Activated T-helper 1 cell treated with anti-CD3 and anti-CD28 coated beads, Interleukin-12 subunit alpha, Interleukin-12 subunit beta, Interleukin-2, Interleukin-4 antibody, amounts not matched to agents 30 ng/mL and 10 ng/mL and 1 ng/mL, durations not matched to agents 14 hours and 24 hours and 36 hours (primary cell): ENCODE measurements at regions of chr19 and their contacts with region 1.

Region 1: DNA sequence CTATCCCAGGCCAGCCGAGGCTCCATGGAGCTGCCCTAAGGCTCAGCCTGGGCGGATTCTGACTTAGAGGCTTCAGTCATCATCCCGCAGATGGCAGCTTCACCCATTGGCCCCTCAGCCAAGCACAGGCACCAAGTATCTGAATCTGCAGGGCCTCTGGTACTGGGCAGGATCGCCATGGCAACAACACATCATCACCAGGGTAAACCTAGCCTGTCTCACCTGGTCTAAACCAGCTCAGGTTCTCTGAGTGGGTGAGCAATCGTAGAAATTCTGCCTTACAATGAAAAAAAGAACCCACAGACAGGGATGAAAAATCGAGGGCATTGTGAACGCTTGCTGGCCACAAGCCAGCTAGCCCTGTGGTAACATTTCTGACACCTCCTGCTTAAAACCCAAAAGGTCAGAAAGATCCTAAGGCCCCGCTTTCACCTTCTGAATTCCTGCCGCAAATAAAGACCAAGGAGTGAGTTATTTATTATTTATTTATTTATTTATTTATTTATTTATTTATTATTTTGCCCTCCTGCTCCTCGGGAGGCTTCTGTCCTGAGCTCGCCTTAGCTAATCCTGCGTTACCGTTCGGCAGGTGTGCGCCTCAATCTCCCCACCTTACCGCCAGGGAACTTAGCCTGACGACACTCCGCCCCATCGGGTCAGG is 12.0 kb upstream of the CEACAM21 start:
- DNase-seq: no peak
- H3K4me3 Mint-ChIP-seq: peak overlapping the region; percentile 61
- H3K27ac Mint-ChIP-seq: peak overlapping the region; percentile 52
- H3K4me1 Mint-ChIP-seq: peaks cover 63% of the 10 kb centered on the region
- H3K27me3 Mint-ChIP-seq: peaks cover 2% of the 10 kb centered on the region

Region 2: DNA sequence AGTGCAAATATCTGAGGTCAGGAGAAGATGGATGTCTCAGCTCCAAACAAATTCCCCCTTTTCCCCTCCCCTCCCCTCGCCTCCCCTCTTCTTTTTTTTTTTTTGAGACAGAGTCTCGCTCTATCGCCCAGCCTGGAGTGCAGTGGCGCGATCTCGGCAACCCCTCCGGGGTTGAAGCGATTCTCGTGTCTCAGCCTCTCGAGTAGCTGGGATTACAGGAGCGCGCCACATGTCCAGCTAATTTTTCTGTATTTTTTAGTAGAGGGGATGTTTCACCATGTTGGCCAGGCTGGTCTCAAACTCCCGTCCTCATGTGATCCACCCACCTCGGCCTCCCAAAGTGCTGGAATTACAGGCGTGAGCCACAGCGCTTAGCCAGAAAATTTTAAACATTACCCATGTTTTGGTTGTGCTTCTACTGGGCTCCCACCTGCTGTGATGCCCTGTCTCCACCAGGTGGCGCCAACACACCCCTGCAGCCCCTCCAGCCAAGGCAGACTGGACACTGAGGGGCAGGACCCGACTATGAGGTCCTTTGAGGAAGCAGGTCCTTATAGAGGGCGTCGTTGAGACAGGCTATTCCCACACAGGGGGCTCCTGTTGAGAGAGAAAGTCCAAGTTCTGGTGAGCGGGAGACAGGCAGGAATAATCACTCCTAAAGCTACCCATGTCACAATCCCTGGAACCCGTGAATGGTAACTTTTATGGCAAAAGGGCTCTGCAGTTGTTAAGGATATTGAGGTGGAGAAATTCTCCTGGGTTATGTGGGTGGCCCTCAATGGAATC is 114.7 kb before region 1 on chr19:
- intact Hi-C with region 1: loop called (anchors 1 kb)
- DNase-seq: peak; percentile 60
- H3K4me3 Mint-ChIP-seq: peak overlapping the region; percentile 81
- H3K27ac Mint-ChIP-seq: no peak overlapping the region
- H3K4me1 Mint-ChIP-seq: peaks cover 15% of the 10 kb centered on the region
- H3K27me3 Mint-ChIP-seq: peaks cover 14% of the 10 kb centered on the region

Region 3: GRCh38 chr19:41521931-41522555 is 41.9 kb before region 1 on chr19:
- intact Hi-C with region 1: loop called (anchors 1 kb)
- DNase-seq: no peak
- H3K4me3 Mint-ChIP-seq: peak overlapping the region; percentile 81
- H3K27ac Mint-ChIP-seq: peak overlapping the region; percentile 83
- H3K4me1 Mint-ChIP-seq: peaks cover 27% of the 10 kb centered on the region
- H3K27me3 Mint-ChIP-seq: peaks cover 21% of the 10 kb centered on the region

Region 4: DNA sequence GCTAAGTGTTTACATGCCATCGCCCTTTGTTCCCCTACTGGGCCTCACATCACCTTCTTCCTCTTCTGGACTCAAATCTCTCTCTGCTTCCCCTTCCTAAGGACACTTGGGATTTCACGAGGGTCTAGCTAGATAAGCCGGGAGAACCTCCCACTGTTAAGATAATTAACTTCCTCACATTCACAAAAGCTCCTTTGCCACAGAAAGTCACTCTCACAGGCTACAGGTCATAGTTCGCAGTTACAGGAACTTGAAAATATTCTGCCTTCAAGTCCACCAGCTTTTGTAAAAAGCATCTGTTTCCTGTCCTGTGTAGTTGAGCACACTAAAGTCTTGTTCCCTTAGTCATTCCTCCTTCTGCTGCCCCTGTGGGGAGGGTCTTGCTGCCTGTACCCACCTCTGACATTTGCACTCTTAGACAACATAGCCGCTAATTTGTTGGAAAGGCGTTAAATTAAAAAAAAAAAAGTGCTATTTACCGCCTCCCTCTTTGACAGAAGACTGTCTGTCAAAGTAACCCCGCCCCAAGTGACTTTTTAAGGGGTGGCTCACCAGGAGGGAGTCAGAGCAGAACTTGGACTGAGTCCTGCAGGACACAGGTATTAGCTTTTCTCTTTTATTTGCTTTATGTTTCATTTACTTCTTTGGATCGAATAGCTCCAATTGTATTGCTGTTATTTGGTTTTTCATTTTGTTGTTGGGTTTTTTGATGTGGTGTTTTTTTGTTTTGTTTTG is 14.9 kb before region 1 on chr19:
- intact Hi-C with region 1: loop called (anchors 1 kb)
- DNase-seq: peak; percentile 78
- H3K4me3 Mint-ChIP-seq: peak overlapping the region; percentile 91
- H3K27ac Mint-ChIP-seq: peak overlapping the region; percentile 93
- H3K4me1 Mint-ChIP-seq: peaks cover 76% of the 10 kb centered on the region
- H3K27me3 Mint-ChIP-seq: no peaks in the 10 kb centered on the region